ENCODE measurements at regions of chr2 and their contacts with region 1.

Region 1: DNA sequence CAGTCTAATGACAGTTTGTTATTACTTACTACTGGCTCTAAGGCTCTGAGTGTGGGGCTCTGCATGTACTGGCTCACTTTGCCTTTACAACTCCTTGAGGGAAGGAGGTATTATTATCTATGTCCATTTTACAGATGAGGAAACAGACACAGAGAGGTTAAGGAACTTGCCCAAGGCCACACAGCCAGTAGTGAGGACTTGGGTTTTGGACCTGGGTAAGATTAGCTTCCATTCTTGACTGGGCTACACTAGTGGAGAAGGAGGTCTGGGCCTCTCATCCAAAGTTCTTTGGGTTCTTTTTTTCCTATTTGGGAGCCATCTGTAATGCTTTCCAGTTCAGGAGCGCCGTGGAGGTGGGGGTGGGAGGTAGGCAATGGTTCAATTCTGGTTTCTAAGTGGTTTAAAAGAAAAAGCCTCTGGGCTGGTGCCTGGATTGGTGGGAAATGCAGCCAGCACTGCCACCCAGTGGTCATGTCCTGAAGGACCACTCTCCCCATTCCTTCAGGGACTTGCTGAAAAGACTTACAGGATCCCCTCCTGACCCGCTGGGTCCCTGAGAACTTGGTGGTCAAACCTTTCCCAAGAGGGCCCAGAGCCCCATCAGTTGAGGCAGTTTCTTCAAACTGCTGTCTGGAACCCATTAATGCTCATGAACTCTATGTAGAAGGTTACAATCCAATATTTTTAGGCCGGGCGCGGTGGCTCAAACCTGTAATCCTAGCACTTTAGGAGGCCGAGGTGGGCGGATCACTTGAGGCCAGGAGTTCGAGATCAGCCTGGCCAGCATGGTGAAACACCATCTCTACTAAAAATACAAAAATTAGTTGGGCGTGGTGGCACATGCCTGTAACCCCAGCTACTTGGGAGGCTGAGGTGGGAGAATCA is 38.6 kb upstream of the NOTO start:
- DNase-seq: peak; percentile 48 to 68
- H3K4me3 ChIP-seq: no peak overlapping the region
- H3K27ac ChIP-seq: no peak overlapping the region
- H3K4me1 ChIP-seq: no peaks in the 10 kb centered on the region
- H3K27me3 ChIP-seq: peaks cover 13% of the 10 kb centered on the region; the same call in 1 of the 2 replicates
- CTCF ChIP-seq: peak; percentile 93

Region 2: GRCh38 chr2:71530641-71531332 is 1632.9 kb before region 1 on chr2:
- CTCF ChIA-PET with region 1: interaction called, 16 read pairs
- POLR2A ChIA-PET with region 1: no interaction called
- intact Hi-C with region 1: no loop called
- DNase-seq: peak in 1 of 2 experiments; percentile 22
- H3K4me3 ChIP-seq: no peak overlapping the region
- H3K27ac ChIP-seq: peak overlapping the region; percentile 29; the same call in 1 of the 2 replicates
- H3K4me1 ChIP-seq: peaks cover 10% of the 10 kb centered on the region; the same call in 1 of the 2 replicates
- H3K27me3 ChIP-seq: no peaks in the 10 kb centered on the region
- CTCF ChIP-seq: peak; percentile 84

Region 3: DNA sequence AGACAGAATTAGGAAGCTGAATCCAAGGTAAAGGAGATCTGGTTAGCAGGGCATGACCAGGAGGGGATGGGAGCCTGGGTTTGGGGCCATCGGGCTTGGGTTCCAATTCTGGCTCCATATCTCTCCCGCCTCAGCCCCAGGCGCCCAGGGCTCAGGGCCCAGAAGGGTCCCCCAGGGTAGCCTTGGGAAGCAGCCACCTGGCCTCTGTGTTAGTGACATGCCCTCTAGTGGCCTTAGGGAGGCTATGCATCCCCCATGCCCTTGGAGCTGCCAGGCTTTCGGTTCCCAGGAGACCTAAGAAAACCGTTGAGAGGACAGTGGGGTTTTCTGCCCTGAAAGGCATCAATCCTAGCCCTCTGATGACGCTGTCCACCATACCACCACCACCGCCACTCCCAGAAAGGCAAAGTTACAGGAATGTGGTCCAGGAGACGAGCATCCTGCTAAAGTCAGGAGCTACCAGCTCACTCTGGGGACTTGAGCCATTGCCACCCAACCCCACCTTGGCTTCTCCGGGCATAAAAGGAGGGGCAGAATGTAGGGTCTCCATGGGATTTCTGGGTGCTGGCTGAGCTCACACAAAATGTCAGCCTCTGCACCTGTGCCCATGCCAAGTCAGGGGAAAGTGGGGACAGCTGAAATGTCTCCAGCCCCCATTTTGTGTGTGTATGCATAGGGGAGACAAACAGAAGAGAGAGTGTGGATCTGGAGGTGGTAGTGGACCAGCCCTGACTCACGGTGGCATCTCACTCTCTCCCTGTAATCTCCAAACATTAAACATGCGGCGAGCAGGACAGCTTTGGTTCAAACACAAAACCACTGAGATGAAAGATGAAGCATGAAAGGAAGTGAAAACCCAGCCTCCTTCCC is 189.9 kb before region 1 on chr2:
- CTCF ChIA-PET with region 1: no interaction called
- POLR2A ChIA-PET with region 1: no interaction called
- intact Hi-C with region 1: no loop called
- DNase-seq: peak; percentile 41
- H3K4me3 ChIP-seq: no peak overlapping the region
- H3K27ac ChIP-seq: no peak overlapping the region
- H3K4me1 ChIP-seq: no peaks in the 10 kb centered on the region
- H3K27me3 ChIP-seq: no peaks in the 10 kb centered on the region
- CTCF ChIP-seq: peak; percentile 93

Measured in PC-9 (cell line).